Activated CD4-positive, alpha-beta T cell treated with anti-CD3 and anti-CD28 coated beads for 36 hours (primary cell): ENCODE measurements at regions of chr2 and their contacts with region 1.

Region 1: GRCh38 chr2:28452534-28453081 is 43.3 kb upstream of the PLB1 start:
- DNase-seq: peak; percentile 92
- ATAC-seq: peak; percentile 57
- H3K4me3 Mint-ChIP-seq: no peak overlapping the region
- H3K27ac Mint-ChIP-seq: peak overlapping the region; percentile 11
- H3K4me1 Mint-ChIP-seq: peaks cover 40% of the 10 kb centered on the region
- H3K27me3 Mint-ChIP-seq: no peaks in the 10 kb centered on the region

Region 2: DNA sequence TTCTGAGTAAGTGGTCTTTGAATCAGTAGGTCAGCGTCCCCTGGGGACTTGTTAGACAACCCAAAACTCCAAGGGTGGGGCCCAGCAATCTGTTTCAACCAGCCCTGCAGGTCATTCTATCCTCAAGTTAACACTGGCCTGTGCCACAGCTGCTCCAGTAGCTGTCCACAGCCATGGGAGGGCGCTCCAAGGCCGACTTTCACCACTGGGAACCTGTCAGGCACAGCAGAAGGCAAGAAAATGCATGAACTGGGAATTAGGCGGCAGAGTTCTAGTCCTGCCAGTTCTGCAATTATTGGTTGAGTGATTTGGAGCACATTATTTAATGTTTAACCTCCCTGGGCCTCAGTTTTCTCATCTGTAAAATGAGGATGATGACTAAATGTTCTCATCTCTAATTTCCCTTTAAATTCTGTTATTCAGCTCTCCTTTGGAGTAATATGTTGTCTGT is 698.4 kb before region 1 on chr2:
- CTCF ChIA-PET with region 1: interaction called, 4 read pairs
- POLR2A ChIA-PET with region 1: no interaction called
- intact Hi-C with region 1: loop called (anchors 1 to 2 kb)
- DNase-seq: peak; percentile 92
- ATAC-seq: peak; percentile 99
- H3K4me3 Mint-ChIP-seq: no peak overlapping the region
- H3K27ac Mint-ChIP-seq: no peak overlapping the region
- H3K4me1 Mint-ChIP-seq: peaks cover 3% of the 10 kb centered on the region
- H3K27me3 Mint-ChIP-seq: peaks cover 3% of the 10 kb centered on the region

Region 3: DNA sequence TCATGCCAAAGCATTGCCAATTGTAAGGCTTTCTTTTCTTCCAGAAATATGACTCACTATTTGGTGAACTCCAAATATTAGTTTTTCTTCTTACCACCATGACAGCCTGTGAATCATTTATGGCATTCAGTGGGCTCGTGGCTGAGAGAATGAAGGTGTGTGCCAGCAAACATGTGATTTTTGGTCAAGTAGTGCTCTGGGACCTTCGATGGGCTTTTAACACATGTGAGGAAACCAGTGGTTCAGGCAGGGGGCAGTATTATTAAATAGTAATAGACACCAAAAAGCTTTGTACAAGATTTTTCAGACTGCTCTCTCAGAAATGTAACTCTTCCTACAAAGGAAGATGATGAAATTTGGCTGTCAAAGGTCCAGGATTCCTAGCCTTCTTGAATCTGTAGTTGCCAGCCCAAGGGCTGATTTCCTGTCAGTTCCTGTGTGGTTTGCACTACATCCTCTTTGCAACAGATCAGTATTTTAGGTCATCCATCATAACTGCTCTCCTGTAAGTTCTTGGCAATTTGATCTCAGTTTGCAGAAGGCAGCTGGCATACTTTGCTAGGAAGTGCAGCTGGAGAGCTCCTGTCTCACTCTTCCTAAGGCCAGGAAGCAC is 497.7 kb before region 1 on chr2:
- CTCF ChIA-PET with region 1: interaction called, 3 read pairs
- POLR2A ChIA-PET with region 1: no interaction called
- intact Hi-C with region 1: loop called (anchors 2 to 5 kb)
- DNase-seq: peak; percentile 71
- ATAC-seq: peak; percentile 72
- H3K4me3 Mint-ChIP-seq: peak overlapping the region; percentile 55
- H3K27ac Mint-ChIP-seq: peak overlapping the region; percentile 91
- H3K4me1 Mint-ChIP-seq: peaks cover 73% of the 10 kb centered on the region
- H3K27me3 Mint-ChIP-seq: no peaks in the 10 kb centered on the region

Region 4: DNA sequence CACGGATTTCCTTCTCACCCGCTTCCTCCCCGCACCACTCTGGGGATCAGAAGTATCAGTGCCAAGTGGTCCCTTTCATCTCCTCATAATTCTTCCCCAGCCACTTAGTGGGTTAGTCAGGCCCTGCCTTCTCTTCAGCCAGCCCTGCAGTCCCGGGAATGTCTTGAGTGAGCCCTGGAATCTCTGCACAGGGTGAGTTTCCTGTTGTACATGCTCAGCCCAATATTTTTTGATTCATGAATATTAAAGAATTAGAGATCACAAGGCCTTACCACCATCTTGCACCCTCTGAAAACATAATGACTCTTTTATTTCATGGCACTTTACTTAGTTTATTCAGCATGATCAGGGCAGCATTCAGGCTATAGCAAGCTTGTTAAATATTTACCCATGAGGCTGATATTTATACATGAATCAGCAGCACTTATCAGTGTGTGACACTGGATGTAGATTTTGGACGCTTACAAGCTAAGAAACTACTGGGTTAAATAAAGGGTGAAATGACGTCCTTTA is 219.4 kb before region 1 on chr2:
- CTCF ChIA-PET with region 1: no interaction called
- POLR2A ChIA-PET with region 1: no interaction called
- intact Hi-C with region 1: no loop called
- DNase-seq: no peak
- ATAC-seq: no peak
- H3K4me3 Mint-ChIP-seq: no peak overlapping the region
- H3K27ac Mint-ChIP-seq: no peak overlapping the region
- H3K4me1 Mint-ChIP-seq: no peaks in the 10 kb centered on the region
- H3K27me3 Mint-ChIP-seq: no peaks in the 10 kb centered on the region

Region 5: GRCh38 chr2:28250006-28250405 is 202.6 kb before region 1 on chr2:
- CTCF ChIA-PET with region 1: no interaction called
- POLR2A ChIA-PET with region 1: no interaction called
- intact Hi-C with region 1: loop called in 1 of 2 experiments (anchors 1 kb)
- DNase-seq: no peak
- ATAC-seq: no peak
- H3K4me3 Mint-ChIP-seq: no peak overlapping the region
- H3K27ac Mint-ChIP-seq: no peak overlapping the region
- H3K4me1 Mint-ChIP-seq: peaks cover 27% of the 10 kb centered on the region
- H3K27me3 Mint-ChIP-seq: no peaks in the 10 kb centered on the region

Region 6: GRCh38 chr2:28356095-28356911 is 96.3 kb before region 1 on chr2:
- CTCF ChIA-PET with region 1: no interaction called
- POLR2A ChIA-PET with region 1: no interaction called
- intact Hi-C with region 1: no loop called
- DNase-seq: peak; percentile 65
- ATAC-seq: peak; percentile 20
- H3K4me3 Mint-ChIP-seq: no peak overlapping the region
- H3K27ac Mint-ChIP-seq: no peak overlapping the region
- H3K4me1 Mint-ChIP-seq: peaks cover 47% of the 10 kb centered on the region
- H3K27me3 Mint-ChIP-seq: no peaks in the 10 kb centered on the region

Region 7: GRCh38 chr2:28413142-28413898 is 39.3 kb before region 1 on chr2:
- CTCF ChIA-PET with region 1: no interaction called
- POLR2A ChIA-PET with region 1: no interaction called
- intact Hi-C with region 1: loop called (anchors 1 kb)
- DNase-seq: no peak
- ATAC-seq: no peak
- H3K4me3 Mint-ChIP-seq: no peak overlapping the region
- H3K27ac Mint-ChIP-seq: peak overlapping the region; percentile 47
- H3K4me1 Mint-ChIP-seq: peaks cover 42% of the 10 kb centered on the region
- H3K27me3 Mint-ChIP-seq: no peaks in the 10 kb centered on the region

Region 8: GRCh38 chr2:28469304-28469703 is 16.7 kb after region 1 on chr2:
- CTCF ChIA-PET with region 1: interaction called, 5 read pairs
- POLR2A ChIA-PET with region 1: no interaction called
- intact Hi-C with region 1: loop called in 1 of 2 experiments (anchors 1 kb)
- DNase-seq: no peak
- ATAC-seq: no peak
- H3K4me3 Mint-ChIP-seq: no peak overlapping the region
- H3K27ac Mint-ChIP-seq: no peak overlapping the region
- H3K4me1 Mint-ChIP-seq: peaks cover 50% of the 10 kb centered on the region
- H3K27me3 Mint-ChIP-seq: peaks cover 3% of the 10 kb centered on the region

Region 9: DNA sequence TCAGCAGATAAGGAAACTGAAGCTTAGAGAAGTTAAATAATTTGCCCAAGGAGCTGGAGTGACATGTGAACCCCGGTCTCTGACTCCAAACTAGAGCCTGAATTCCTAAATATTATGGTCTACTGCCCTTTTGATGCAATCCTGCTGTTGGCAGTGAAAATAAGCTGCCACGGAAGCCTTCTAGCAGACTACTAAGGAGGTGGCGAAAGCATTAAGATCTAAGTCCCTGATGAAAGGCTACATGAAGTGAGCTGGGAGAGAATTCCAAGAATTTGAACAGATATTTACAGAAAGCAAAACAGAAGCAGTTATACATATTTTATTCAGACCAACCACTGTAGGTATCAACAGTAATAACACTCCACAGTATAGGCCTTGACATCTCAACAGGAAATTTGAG is 389.4 kb after region 1 on chr2:
- CTCF ChIA-PET with region 1: no interaction called
- POLR2A ChIA-PET with region 1: no interaction called
- intact Hi-C with region 1: no loop called
- DNase-seq: no peak
- ATAC-seq: no peak
- H3K4me3 Mint-ChIP-seq: no peak overlapping the region
- H3K27ac Mint-ChIP-seq: no peak overlapping the region
- H3K4me1 Mint-ChIP-seq: no peaks in the 10 kb centered on the region
- H3K27me3 Mint-ChIP-seq: no peaks in the 10 kb centered on the region